T-cell (primary cell): ENCODE measurements at regions of chr7 and their contacts with region 1.

Region 1: DNA sequence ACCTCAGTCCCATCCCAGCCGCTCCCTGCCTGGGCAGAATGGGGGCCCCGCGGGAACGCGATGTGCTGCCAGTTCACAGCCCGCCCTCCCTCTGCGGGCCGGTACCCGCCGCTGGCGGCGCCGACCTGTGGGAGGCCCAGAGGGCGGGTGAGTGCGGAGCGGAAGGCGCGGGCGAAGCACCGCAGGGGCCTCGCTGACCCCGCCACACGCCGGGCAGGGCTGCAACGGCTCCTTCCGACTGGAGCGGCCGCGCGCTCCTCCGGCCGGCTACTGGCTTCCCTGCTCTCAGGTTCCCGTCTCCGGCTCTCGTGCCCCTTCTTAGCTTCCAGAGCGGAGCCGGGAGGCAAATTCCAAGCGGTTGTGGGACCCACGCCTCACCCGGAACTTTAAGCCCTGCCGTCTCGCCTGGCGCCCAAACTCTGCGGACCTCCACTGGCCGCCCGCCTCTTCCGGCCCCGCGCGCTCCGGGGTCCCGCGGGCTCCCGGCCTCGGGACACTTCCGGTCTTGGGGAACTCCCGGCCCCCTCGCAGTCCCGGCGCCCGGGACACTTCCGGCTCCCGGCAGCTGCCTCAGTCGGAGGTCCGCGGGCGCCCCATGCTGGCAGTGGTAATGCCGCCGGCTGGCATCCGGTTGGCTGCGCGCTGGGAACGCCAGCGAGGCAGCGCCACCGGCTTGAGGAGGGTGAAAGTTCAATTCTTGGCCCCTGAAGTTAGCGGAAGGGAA is at the start of gene CYREN:
- DNase-seq: peak; percentile 71 to 93 (median 85)
- ATAC-seq: peak; percentile 83 to 85 (median 84)
- H3K4me3 ChIP-seq: peak within 1 kb of the TSS; percentile 73 to 89
- H3K4me3 Mint-ChIP-seq: peak within 1 kb of the TSS; percentile 85 to 89 (median 85)
- H3K27ac ChIP-seq: peak within 1 kb of the TSS; percentile 98
- H3K27ac Mint-ChIP-seq: peak within 1 kb of the TSS; percentile 96 to 97
- H3K4me1 ChIP-seq: peaks cover 10 to 54% of the 10 kb centered on the region in 2 experiments
- H3K4me1 Mint-ChIP-seq: peaks cover 55 to 59% (median 59%) of the 10 kb centered on the region in 3 donors
- H3K27me3 ChIP-seq: no peaks in the 10 kb centered on the region
- H3K27me3 Mint-ChIP-seq: no peaks in the 10 kb centered on the region
- total RNA-seq, gene CYREN: 24.3 to 46.4 (median 44.6) TPM

Region 2: GRCh38 chr7:134986363-134987251 is 183.8 kb before region 1 on chr7 and contains the start of gene AGBL3:
- CTCF ChIA-PET with region 1: interaction called, 19 read pairs
- POLR2A ChIA-PET with region 1: no interaction called
- DNase-seq: peak; percentile 74 to 92 (median 86)
- ATAC-seq: peak; percentile 90 to 93 (median 93)
- H3K4me3 ChIP-seq: peak within 1 kb of the TSS; percentile 89 to 96
- H3K4me3 Mint-ChIP-seq: peak within 1 kb of the TSS; percentile 98 to 99 (median 99)
- H3K27ac ChIP-seq: peak within 1 kb of the TSS; percentile 94
- H3K27ac Mint-ChIP-seq: peak within 1 kb of the TSS; percentile 96 to 99
- H3K4me1 ChIP-seq: peaks cover under 1 to 32% of the 10 kb centered on the region in 2 experiments
- H3K4me1 Mint-ChIP-seq: peaks cover 35 to 48% (median 48%) of the 10 kb centered on the region in 3 donors
- H3K27me3 ChIP-seq: no peaks in the 10 kb centered on the region
- H3K27me3 Mint-ChIP-seq: no peaks in the 10 kb centered on the region
- total RNA-seq, gene AGBL3: 2.5 to 6.7 (median 3.5) TPM